H1 (cell line): ENCODE measurements at regions of chr2 and their contacts with region 1.

Region 1: GRCh38 chr2:172465417-172466334 is 38.3 kb downstream of the ITGA6 start:
- DNase-seq: peak in 1 of 2 experiments; percentile 73
- H3K4me3 ChIP-seq: no peak overlapping the region
- H3K27ac ChIP-seq: no peak overlapping the region
- H3K4me1 ChIP-seq: peaks cover 10 to 19% (median 11%) of the 10 kb centered on the region in 4 experiments; a peak in 6 of 7 replicates
- H3K27me3 ChIP-seq: no peaks in the 10 kb centered on the region
- CTCF ChIP-seq: peak; percentile 30 to 86 (median 67)
- EP300 ChIP-seq: no peak
- POLR2A ChIP-seq: no peak
- RAD21 ChIP-seq: peak; percentile 93 to 94

Region 2: GRCh38 chr2:172200495-172201085 is 265.1 kb before region 1 on chr2:
- CTCF ChIA-PET with region 1: interaction called, 17 read pairs
- POLR2A ChIA-PET with region 1: no interaction called
- DNase-seq: peak in 1 of 2 experiments; percentile 79
- H3K4me3 ChIP-seq: no peak overlapping the region
- H3K27ac ChIP-seq: no peak overlapping the region
- H3K4me1 ChIP-seq: peaks cover 0 to 8% (median 0%) of the 10 kb centered on the region in 4 experiments; a peak in 2 of 7 replicates
- H3K27me3 ChIP-seq: no peaks in the 10 kb centered on the region
- CTCF ChIP-seq: peak in 2 of 3 experiments; percentile 34 to 69; a peak in 2 of 4 replicates
- EP300 ChIP-seq: no peak
- POLR2A ChIP-seq: no peak
- RAD21 ChIP-seq: peak; percentile 69 to 76

Region 3: GRCh38 chr2:172234716-172235691 is 230.7 kb before region 1 on chr2:
- CTCF ChIA-PET with region 1: interaction called, 12 read pairs
- POLR2A ChIA-PET with region 1: no interaction called
- DNase-seq: peak in 1 of 2 experiments; percentile 79
- H3K4me3 ChIP-seq: peak overlapping the region; percentile 44 to 64 (median 53)
- H3K27ac ChIP-seq: no peak overlapping the region
- H3K4me1 ChIP-seq: peaks cover 3 to 20% (median 16%) of the 10 kb centered on the region in 4 experiments; a peak in 6 of 7 replicates
- H3K27me3 ChIP-seq: peaks cover 0 to 28% (median 17%) of the 10 kb centered on the region in 4 experiments; a peak in 5 of 7 replicates
- CTCF ChIP-seq: no peak
- EP300 ChIP-seq: no peak
- POLR2A ChIP-seq: 0 out of 3 replicates have a peak, but pooled peaks of 1 of the 2 experiments have one; percentile 21
- RAD21 ChIP-seq: peak in 1 of 2 experiments; percentile 28; a peak in 1 of 4 replicates

Region 4: GRCh38 chr2:172335736-172336135 is 129.9 kb before region 1 on chr2:
- CTCF ChIA-PET with region 1: interaction called, 12 read pairs
- POLR2A ChIA-PET with region 1: no interaction called
- DNase-seq: no peak
- H3K4me3 ChIP-seq: no peak overlapping the region
- H3K27ac ChIP-seq: no peak overlapping the region
- H3K4me1 ChIP-seq: no peaks in the 10 kb centered on the region; a peak in 1 of 7 replicates
- H3K27me3 ChIP-seq: no peaks in the 10 kb centered on the region
- CTCF ChIP-seq: no peak
- EP300 ChIP-seq: no peak
- POLR2A ChIP-seq: no peak
- RAD21 ChIP-seq: no peak

Region 5: DNA sequence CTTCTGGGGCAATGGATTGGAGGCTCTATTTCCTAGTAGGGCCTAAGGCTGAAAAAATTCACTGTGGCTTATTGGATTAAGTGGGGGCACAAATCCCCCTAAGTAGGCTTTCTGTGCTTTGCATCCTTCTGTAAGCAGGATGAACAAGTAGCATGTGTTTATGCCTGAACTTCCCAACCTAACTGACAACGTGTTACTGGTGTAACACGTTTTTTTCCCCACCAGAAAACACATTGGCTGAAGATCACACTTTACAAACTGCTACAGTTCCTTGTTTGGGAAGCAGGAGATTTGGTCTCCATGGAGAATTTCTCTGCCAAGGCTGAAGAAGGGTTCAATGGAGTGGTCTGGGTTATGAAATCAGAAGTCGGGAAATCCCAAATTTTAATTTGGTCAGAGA is 45.5 kb before region 1 on chr2:
- CTCF ChIA-PET with region 1: interaction called, 634 read pairs
- POLR2A ChIA-PET with region 1: interaction called, 3 read pairs
- DNase-seq: no peak
- H3K4me3 ChIP-seq: no peak overlapping the region
- H3K27ac ChIP-seq: no peak overlapping the region
- H3K4me1 ChIP-seq: no peaks in the 10 kb centered on the region
- H3K27me3 ChIP-seq: no peaks in the 10 kb centered on the region
- CTCF ChIP-seq: no peak
- EP300 ChIP-seq: no peak
- POLR2A ChIP-seq: no peak
- RAD21 ChIP-seq: no peak